PC-3 (cell line): ENCODE measurements at regions of chr3 and their contacts with region 1.

Region 1: GRCh38 chr3:134197681-134198261 is 52.9 kb downstream of the RYK start:
- DNase-seq: peak; percentile 72
- ATAC-seq: peak; percentile 48
- H3K4me3 ChIP-seq: no peak overlapping the region
- H3K27ac ChIP-seq: no peak overlapping the region
- H3K4me1 ChIP-seq: peaks cover 20% of the 10 kb centered on the region
- H3K27me3 ChIP-seq: no peaks in the 10 kb centered on the region
- CTCF ChIP-seq: peak; percentile 77

Region 2: GRCh38 chr3:134029734-134030378 is 167.9 kb before region 1 on chr3 and contains the start of gene SLCO2A1:
- CTCF ChIA-PET with region 1: no interaction called
- POLR2A ChIA-PET with region 1: no interaction called
- intact Hi-C with region 1: no loop called
- DNase-seq: no peak
- ATAC-seq: peak; percentile 27; the same call in 1 of the 2 replicates
- H3K4me3 ChIP-seq: peak within 1 kb of the TSS; percentile 60
- H3K27ac ChIP-seq: no peak within 1 kb of the TSS
- H3K4me1 ChIP-seq: no peaks in the 10 kb centered on the region
- H3K27me3 ChIP-seq: peaks cover 7% of the 10 kb centered on the region; the same call in 1 of the 2 replicates
- CTCF ChIP-seq: no peak
- total RNA-seq, gene SLCO2A1: not detected in 2 replicates

Region 3: DNA sequence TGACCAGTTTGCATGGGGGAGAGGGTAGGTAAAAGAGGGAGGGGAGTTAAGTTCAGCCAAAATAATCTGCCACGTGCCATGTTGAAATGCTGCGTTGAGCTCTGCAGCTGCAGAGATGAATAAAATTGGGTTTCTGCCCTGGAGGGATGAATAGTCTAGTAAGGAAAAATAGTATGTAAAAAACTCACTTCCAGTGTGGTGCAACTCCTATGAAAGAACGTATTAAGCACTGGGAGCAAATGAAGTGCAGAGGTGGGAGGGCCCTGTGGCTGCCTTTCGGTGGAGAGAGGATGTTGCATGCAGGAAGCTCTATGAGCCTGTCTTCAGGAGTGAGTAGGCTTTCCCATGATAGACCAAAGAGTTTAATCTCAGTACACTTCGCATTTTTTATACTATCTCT is 296.7 kb after region 1 on chr3:
- CTCF ChIA-PET with region 1: no interaction called
- POLR2A ChIA-PET with region 1: no interaction called
- intact Hi-C with region 1: loop called (anchors 5 kb)
- DNase-seq: no peak
- ATAC-seq: no peak
- H3K4me3 ChIP-seq: no peak overlapping the region
- H3K27ac ChIP-seq: no peak overlapping the region
- H3K4me1 ChIP-seq: no peaks in the 10 kb centered on the region
- H3K27me3 ChIP-seq: no peaks in the 10 kb centered on the region
- CTCF ChIP-seq: no peak